Mammary epithelial cell (primary cell): ENCODE measurements at regions of chr20 and their contacts with region 1.

Region 1: DNA sequence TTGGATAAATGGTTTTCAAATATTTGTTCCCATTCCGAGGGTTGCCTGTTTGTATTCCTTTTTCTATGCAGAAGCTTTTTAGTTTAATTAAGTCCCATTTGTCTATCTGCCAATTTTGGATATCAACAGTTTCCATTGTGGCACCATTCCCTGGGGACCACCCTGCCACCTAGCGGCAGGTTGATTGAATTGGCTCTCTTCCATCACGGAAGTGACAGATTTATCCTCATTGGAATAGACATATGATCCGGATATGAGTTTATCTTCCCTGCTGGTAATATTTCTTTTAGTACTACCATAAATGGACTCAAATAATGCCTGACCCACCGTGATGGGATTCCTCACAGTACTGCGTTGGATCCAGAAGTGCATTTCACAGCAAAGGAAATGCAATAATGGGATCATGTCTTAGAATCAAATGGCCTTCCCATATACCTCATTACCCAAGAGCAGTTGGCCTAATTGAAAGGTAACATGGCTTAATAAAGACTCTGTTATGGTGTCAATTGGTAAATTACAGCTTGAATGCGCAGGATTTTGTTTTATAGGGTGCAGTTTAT is 327.0 kb downstream of the BMP2 start:
- DNase-seq: peak; percentile 62
- H3K4me3 ChIP-seq: no peak overlapping the region
- H3K27ac ChIP-seq: no peak overlapping the region
- H3K4me1 ChIP-seq: no peaks in the 10 kb centered on the region
- H3K27me3 ChIP-seq: no peaks in the 10 kb centered on the region
- CTCF ChIP-seq: peak; percentile 69 to 77

Region 2: GRCh38 chr20:6169251-6169650 is 925.3 kb before region 1 on chr20:
- CTCF ChIA-PET with region 1: no interaction called
- dilution Hi-C with region 1: no loop called
- in situ Hi-C with region 1: no loop called
- intact Hi-C with region 1: loop called (anchors 5 kb)
- DNase-seq: peak; percentile 40
- H3K4me3 ChIP-seq: no peak overlapping the region
- H3K27ac ChIP-seq: no peak overlapping the region
- H3K4me1 ChIP-seq: no peaks in the 10 kb centered on the region
- H3K27me3 ChIP-seq: no peaks in the 10 kb centered on the region
- CTCF ChIP-seq: peak; percentile 42 to 50

Region 3: GRCh38 chr20:6583134-6583738 is 511.3 kb before region 1 on chr20:
- CTCF ChIA-PET with region 1: no interaction called
- dilution Hi-C with region 1: no loop called
- in situ Hi-C with region 1: no loop called
- intact Hi-C with region 1: loop called (anchors 2 kb)
- DNase-seq: peak; percentile 58
- H3K4me3 ChIP-seq: no peak overlapping the region
- H3K27ac ChIP-seq: no peak overlapping the region
- H3K4me1 ChIP-seq: peaks cover 10% of the 10 kb centered on the region
- H3K27me3 ChIP-seq: no peaks in the 10 kb centered on the region
- CTCF ChIP-seq: peak; percentile 72 to 80

Region 4: DNA sequence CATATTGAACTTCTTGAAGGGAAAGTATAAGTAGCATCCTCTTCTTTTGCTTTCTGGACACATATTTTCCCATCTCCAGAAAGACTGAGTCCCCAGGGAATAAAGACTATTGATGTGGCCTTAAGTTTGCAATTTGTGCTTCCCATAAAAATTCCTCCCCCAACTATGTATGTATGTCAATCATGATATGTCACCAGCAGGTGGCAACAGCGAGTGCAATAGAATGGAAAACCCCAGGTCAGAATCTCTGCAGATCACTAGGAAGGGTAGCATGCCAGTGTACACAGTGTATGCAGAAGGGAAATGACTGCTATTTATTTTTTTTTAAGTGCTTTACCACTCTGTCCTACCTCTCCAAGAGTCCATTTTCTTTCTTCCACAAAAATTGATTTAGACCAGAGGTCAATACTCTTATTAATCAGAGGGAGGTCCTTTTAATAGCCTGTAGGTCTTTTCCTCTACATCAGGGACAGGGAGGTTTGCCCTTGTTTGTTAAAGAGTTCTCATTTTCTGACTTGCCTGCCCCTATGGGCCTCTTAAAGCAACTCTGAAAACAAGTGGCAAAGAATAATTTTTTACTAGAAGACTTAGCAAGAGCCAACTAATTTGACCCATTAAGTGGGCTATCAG is 265.6 kb before region 1 on chr20:
- CTCF ChIA-PET with region 1: no interaction called
- dilution Hi-C with region 1: no loop called
- in situ Hi-C with region 1: loop called in 1 of 2 experiments (anchors 10 kb)
- intact Hi-C with region 1: loop called (anchors 1 kb)
- DNase-seq: peak; percentile 68
- H3K4me3 ChIP-seq: no peak overlapping the region
- H3K27ac ChIP-seq: peak overlapping the region; percentile 39
- H3K4me1 ChIP-seq: peaks cover 11% of the 10 kb centered on the region
- H3K27me3 ChIP-seq: no peaks in the 10 kb centered on the region
- CTCF ChIP-seq: peak; percentile 73 to 76

Region 5: GRCh38 chr20:6940046-6940445 is 154.5 kb before region 1 on chr20:
- CTCF ChIA-PET with region 1: no interaction called
- dilution Hi-C with region 1: no loop called
- in situ Hi-C with region 1: no loop called
- intact Hi-C with region 1: loop called (anchors 5 kb)
- DNase-seq: peak; percentile 1
- H3K4me3 ChIP-seq: no peak overlapping the region
- H3K27ac ChIP-seq: no peak overlapping the region
- H3K4me1 ChIP-seq: peaks cover 6% of the 10 kb centered on the region
- H3K27me3 ChIP-seq: no peaks in the 10 kb centered on the region
- CTCF ChIP-seq: peak; percentile 85 to 88